PC-9 (cell line): ENCODE measurements at regions of chr13 and their contacts with region 1.

Region 1: DNA sequence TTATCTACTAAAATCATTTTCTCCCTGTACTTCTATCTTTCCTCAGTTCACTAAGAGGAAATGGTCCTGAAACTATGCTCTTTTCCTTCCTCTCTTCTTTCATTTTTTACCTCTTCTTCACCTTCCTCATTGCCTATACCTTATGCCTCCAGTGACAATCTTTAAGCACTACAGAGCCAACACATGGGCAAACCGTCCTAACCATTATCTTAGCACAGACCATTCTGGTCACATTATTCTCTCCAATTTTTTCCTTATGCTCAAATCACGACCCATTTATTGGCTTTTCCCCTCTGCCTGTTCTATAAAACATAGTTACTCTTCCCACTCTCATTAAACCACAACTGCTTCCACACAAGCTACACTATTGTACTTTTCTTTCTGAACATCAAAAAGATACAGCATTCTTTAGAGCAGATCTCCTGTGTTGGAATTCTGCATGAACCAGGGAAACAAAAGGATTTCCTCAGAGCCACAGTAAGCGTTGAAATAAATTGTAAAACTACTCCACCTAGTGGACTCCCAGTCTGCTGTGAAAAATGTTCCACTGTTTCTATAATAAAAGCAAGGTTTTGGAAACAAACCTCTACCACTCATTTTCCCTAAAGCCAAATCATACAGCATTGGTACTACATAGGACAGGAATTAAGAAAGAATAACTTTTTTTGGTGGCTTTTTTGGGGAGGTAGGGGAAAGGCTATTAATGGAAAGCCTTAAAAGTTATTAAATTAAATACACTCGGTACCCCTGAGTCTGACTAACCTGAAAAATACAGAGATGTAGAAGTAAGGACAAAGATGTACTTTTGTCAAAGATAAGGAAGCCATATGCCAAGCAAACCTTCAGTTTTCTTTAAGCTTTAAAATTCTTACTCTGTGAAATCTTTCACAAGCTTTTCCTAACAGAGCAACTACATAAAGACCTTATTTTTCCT is 19.5 kb downstream of the NUFIP1 start:
- DNase-seq: peak in 1 of 2 experiments; percentile 57
- H3K4me3 ChIP-seq: no peak overlapping the region
- H3K27ac ChIP-seq: no peak overlapping the region
- H3K4me1 ChIP-seq: peaks cover 15% of the 10 kb centered on the region
- H3K27me3 ChIP-seq: no peaks in the 10 kb centered on the region
- CTCF ChIP-seq: peak; percentile 88

Region 2: GRCh38 chr13:43905435-43906031 is 1064.3 kb before region 1 on chr13:
- CTCF ChIA-PET with region 1: no interaction called
- POLR2A ChIA-PET with region 1: no interaction called
- intact Hi-C with region 1: loop called (anchors 1 kb)
- DNase-seq: peak; percentile 9 to 62
- H3K4me3 ChIP-seq: no peak overlapping the region
- H3K27ac ChIP-seq: no peak overlapping the region
- H3K4me1 ChIP-seq: peaks cover 12% of the 10 kb centered on the region
- H3K27me3 ChIP-seq: no peaks in the 10 kb centered on the region
- CTCF ChIP-seq: peak; percentile 77

Region 3: DNA sequence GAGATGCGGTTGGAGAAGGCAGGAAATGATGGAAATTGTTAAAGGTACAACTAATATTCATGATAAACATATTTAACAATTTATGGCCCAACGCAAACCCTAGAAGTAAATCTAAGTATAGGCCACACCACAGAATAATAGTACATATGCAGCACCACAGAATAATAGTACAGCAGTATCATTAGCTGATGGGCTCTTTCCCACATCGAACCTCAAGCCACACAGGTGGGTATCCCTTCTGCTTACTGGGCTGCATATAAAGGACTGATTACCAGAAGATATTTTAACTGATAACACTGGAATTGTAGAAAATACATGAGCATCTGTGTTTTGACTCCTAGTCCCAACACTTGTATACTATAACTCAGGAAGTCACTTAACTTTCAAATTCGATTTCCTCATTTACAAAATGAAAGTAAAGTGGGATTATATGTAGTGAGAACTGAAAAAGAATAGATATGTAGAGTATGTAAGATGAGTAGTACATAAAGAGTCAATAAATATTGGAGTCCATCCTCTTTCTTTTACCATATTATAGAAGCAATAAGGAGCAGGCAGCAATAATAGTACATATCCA is 485.2 kb before region 1 on chr13:
- CTCF ChIA-PET with region 1: interaction called, 3 read pairs
- POLR2A ChIA-PET with region 1: no interaction called
- intact Hi-C with region 1: loop called (anchors 1 kb)
- DNase-seq: no peak
- H3K4me3 ChIP-seq: no peak overlapping the region
- H3K27ac ChIP-seq: peak overlapping the region; percentile 28; the same call in 1 of the 2 replicates
- H3K4me1 ChIP-seq: peaks cover 3% of the 10 kb centered on the region; the same call in 1 of the 2 replicates
- H3K27me3 ChIP-seq: no peaks in the 10 kb centered on the region
- CTCF ChIP-seq: no peak

Region 4: GRCh38 chr13:44815623-44816022 is 154.2 kb before region 1 on chr13:
- CTCF ChIA-PET with region 1: no interaction called
- POLR2A ChIA-PET with region 1: no interaction called
- intact Hi-C with region 1: loop called (anchors 1 kb)
- DNase-seq: peak; percentile 82 to 96
- H3K4me3 ChIP-seq: no peak overlapping the region
- H3K27ac ChIP-seq: peak overlapping the region; percentile 86
- H3K4me1 ChIP-seq: peaks cover 64% of the 10 kb centered on the region
- H3K27me3 ChIP-seq: no peaks in the 10 kb centered on the region
- CTCF ChIP-seq: no peak

Region 5: GRCh38 chr13:44955406-44955805 is 14.4 kb before region 1 on chr13:
- CTCF ChIA-PET with region 1: interaction called, 4 read pairs
- POLR2A ChIA-PET with region 1: no interaction called
- intact Hi-C with region 1: loop called (anchors 1 kb)
- DNase-seq: peak; percentile 27 to 38
- H3K4me3 ChIP-seq: no peak overlapping the region
- H3K27ac ChIP-seq: no peak overlapping the region
- H3K4me1 ChIP-seq: no peaks in the 10 kb centered on the region
- H3K27me3 ChIP-seq: no peaks in the 10 kb centered on the region
- CTCF ChIP-seq: no peak

Region 6: GRCh38 chr13:45310341-45311125 is 340.7 kb after region 1 on chr13:
- CTCF ChIA-PET with region 1: no interaction called
- POLR2A ChIA-PET with region 1: no interaction called
- intact Hi-C with region 1: loop called (anchors 1 kb)
- DNase-seq: no peak
- H3K4me3 ChIP-seq: peak overlapping the region; percentile 43; the same call in 1 of the 2 replicates
- H3K27ac ChIP-seq: no peak overlapping the region
- H3K4me1 ChIP-seq: peaks cover 15% of the 10 kb centered on the region
- H3K27me3 ChIP-seq: no peaks in the 10 kb centered on the region
- CTCF ChIP-seq: no peak